Lower leg skin (tissue), 4 donors: ENCODE measurements at regions of chr20 and their contacts with region 1.

Region 1: GRCh38 chr20:23937303-23938117 is 51.1 kb downstream of the GGTLC1 start:
- DNase-seq: peak in 1 of 2 donors; percentile 41
- H3K4me3 ChIP-seq: no peak overlapping the region
- CTCF ChIP-seq: peak in 1 of 3 donors; percentile 8
- POLR2A ChIP-seq: no peak

Region 2: GRCh38 chr20:24160563-24161375 is 223.3 kb after region 1 on chr20:
- intact Hi-C with region 1: no loop called
- DNase-seq: no peak
- H3K4me3 ChIP-seq: no peak overlapping the region
- CTCF ChIP-seq: no peak
- POLR2A ChIP-seq: no peak

Region 3: GRCh38 chr20:24917797-24918578 is 980.5 kb after region 1 on chr20:
- intact Hi-C with region 1: loop called (anchors 10 kb)
- DNase-seq: peak; percentile 41 to 88
- H3K4me3 ChIP-seq: no peak overlapping the region
- CTCF ChIP-seq: no peak
- POLR2A ChIP-seq: no peak